G401 (cell line): ENCODE measurements at regions of chr9 and their contacts with region 1.

Region 1: DNA sequence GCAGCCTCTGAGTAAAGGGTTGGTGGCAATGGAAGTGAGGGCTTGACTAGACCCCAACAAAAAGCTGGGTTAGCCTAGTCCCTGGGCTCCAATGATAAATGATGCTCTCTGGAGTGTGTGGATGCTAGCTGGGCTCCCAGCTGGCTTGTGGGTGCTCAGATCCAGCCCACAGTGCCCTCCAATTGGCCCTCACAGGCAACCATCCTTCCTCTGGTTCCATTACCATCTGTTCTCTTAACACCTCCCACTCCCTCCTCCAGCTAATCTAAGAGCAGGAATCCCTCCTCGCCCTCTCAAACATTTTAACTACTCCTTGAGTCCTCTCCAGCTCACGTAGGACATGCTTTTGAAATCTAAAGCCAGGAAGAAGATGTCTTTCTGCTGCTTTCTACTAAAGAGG is 25.2 kb upstream of the FRMD3 start:
- DNase-seq: no peak

Region 2: DNA sequence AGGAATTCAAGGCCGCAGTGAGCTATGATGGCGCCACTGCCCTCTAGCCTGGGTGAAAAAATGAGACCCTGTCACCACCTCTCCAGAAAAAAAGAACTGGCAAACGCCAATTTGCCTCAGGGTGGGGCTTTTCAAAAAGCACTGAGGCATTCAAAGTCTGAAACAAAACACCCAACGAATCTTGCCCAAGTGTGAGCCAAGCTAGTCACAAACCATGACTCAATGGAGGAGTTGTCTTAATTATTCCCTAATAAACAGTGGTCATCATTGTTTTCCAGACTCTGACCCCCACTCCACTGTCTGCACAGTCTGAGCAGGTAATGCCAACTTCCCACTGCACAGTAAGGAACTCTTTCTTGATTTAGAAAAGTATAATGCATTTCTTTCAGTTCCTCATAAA is 41.9 kb before region 1 on chr9:
- in situ Hi-C with region 1: loop called (anchors 5 kb)
- DNase-seq: no peak